Activated CD4-positive, alpha-beta memory T cell treated with anti-CD3 and anti-CD28 coated beads, Interleukin-2, amount 10 ng/mL, durations not matched to agents 7 days and 5 days (primary cell): ENCODE measurements at regions of chr7 and their contacts with region 1.

Region 1: DNA sequence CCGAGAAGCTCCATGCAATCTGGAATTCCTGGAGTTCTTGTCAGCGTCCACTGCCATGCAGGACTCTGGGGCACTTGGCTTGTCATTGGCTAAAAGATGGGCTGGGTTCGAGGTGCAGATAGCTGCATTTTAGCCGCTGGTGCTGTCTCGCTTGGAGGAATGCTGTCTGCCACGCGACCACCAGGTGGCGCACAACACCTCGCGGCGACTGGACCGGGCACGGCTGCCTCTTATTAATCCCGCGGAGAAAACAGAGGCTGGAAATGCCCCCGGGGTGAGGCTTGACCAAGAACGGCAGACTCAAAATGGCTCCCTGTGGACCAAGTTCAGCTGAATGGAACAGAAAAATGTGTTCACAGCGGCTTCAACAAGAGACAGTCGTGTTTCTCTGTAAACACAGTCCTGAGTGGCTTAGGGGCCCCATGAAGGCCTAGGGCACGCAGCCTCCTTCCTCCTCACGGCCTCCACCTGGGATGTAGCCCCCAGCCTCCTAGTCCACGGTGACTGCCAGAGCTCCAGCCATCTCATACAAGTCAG is 46.2 kb downstream of the AOC1 start:
- DNase-seq: peak; percentile 81
- H3K4me3 Mint-ChIP-seq: no peak overlapping the region
- H3K27ac Mint-ChIP-seq: no peak overlapping the region
- H3K4me1 Mint-ChIP-seq: peaks cover 13% of the 10 kb centered on the region
- H3K27me3 Mint-ChIP-seq: peaks cover 58% of the 10 kb centered on the region

Region 2: GRCh38 chr7:150876817-150877526 is 21.6 kb before region 1 on chr7:
- CTCF ChIA-PET with region 1: interaction called, 11 read pairs
- POLR2A ChIA-PET with region 1: no interaction called
- DNase-seq: peak; percentile 37
- H3K4me3 Mint-ChIP-seq: no peak overlapping the region
- H3K27ac Mint-ChIP-seq: no peak overlapping the region
- H3K4me1 Mint-ChIP-seq: peaks cover 3% of the 10 kb centered on the region
- H3K27me3 Mint-ChIP-seq: peaks cover 54% of the 10 kb centered on the region

Region 3: DNA sequence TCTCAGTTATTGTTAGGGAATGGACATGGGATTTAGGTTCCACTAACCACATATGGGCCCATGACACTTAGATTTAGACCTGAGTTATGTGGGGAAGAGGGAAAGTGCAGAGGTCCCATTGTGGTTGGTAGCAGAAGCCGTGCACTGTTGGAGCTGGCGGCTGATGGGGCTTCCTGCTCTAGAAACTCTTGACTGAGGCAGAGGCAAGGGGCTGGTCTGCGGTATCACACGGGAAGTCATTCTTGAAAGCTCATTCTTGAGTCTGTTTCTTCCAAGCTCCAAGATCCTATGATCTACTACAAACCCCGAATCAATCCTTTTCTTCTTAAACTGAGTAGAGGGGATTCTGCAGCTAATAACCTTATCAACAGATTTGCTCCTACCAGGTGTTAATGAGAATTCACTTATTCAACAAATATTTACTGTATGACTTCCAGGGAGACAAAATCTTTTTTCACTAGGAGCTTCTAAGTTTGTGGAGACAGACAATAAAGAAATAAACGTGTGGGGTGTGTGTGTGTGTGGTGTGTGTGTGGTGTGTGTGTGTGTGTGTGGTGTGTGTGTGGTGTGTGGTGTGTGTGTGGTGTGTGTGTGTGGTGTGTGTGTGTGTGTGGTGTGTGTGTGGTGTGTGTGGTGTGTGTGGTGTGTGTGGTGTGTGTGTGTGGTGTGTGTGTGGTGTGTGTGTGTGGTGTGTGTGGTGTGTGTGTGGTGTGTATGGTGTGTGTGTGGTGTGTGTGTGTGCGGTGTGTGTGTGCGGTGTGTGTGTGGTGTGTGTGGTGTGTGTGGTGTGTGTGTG is 10.9 kb after region 1 on chr7:
- CTCF ChIA-PET with region 1: interaction called, 21 read pairs
- POLR2A ChIA-PET with region 1: no interaction called
- DNase-seq: peak; percentile 70
- H3K4me3 Mint-ChIP-seq: peak overlapping the region; percentile 4
- H3K27ac Mint-ChIP-seq: peak overlapping the region; percentile 29
- H3K4me1 Mint-ChIP-seq: peaks cover 8% of the 10 kb centered on the region
- H3K27me3 Mint-ChIP-seq: peaks cover 37% of the 10 kb centered on the region